PC-9 (cell line): ENCODE measurements at regions of chr12 and their contacts with region 1.

Region 1: GRCh38 chr12:26126340-26127284 is 1.8 kb upstream of the BHLHE41 start:
- DNase-seq: peak; percentile 72 to 91
- H3K4me3 ChIP-seq: peak overlapping the region; percentile 87
- H3K27ac ChIP-seq: peak overlapping the region; percentile 97
- H3K4me1 ChIP-seq: peaks cover 26% of the 10 kb centered on the region
- H3K27me3 ChIP-seq: no peaks in the 10 kb centered on the region
- CTCF ChIP-seq: peak; percentile 35; the same call in 1 of the 2 replicates

Region 2: DNA sequence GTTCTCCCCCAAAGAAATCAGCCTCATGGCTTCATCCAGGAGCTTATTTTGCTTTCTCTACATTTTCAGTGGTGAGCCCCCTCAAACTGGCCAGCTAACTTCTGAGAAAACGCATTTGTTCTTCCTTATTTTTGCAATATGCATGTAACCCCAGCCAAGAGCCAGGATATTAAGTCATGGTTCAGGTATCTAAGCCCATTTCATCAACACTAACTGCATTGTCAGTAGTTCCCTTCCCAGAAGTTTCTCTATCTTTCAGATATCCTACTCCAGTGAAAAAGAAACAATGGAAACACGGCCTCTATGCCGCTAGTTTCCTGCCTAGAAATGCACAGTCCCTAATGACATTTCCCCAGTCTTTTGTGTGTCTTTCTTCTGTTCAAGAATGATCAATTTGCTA is 270.9 kb before region 1 on chr12:
- CTCF ChIA-PET with region 1: no interaction called
- POLR2A ChIA-PET with region 1: no interaction called
- intact Hi-C with region 1: no loop called
- DNase-seq: no peak
- H3K4me3 ChIP-seq: no peak overlapping the region
- H3K27ac ChIP-seq: no peak overlapping the region
- H3K4me1 ChIP-seq: no peaks in the 10 kb centered on the region
- H3K27me3 ChIP-seq: no peaks in the 10 kb centered on the region
- CTCF ChIP-seq: no peak

Region 3: DNA sequence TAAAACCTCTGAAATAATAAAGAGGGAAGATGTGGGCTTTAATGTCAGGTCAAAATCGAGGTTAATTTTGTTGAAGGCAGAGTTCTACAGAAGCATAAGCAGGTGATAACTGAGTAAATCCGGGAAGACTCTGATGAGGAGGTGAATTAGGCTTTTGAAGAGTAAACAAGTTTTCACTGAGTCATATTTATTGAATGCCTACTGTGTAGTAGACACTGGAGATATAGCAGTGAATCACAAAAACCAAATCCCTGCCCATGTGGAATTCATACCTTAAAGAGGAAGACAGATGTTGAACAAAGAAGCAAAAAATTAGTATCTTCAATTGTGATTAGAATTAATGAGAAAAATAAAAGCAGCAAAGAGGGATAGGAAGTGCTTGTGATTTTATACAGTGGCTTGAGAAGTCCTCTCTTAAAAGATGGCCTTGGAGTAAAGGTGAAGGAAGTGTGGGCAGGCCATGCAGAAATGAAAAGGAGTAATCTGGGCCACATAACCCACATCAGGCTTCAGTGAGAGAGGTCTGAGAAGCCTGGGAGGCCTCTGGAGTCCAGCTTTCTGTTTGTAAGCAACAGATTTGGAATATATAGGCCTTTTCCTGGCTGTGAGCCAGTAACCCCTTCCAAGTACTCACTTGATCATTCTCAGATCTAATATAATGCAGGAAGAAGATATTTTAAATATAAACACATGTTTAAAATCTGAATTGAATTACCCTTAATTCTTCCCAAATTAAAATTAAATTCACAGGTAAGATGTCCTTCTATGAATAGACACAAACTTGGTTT is 48.5 kb before region 1 on chr12:
- CTCF ChIA-PET with region 1: interaction called, 14 read pairs
- POLR2A ChIA-PET with region 1: no interaction called
- intact Hi-C with region 1: no loop called
- DNase-seq: peak in 1 of 2 experiments; percentile 60
- H3K4me3 ChIP-seq: no peak overlapping the region
- H3K27ac ChIP-seq: no peak overlapping the region; the same call in 1 of the 2 replicates
- H3K4me1 ChIP-seq: peaks cover 12% of the 10 kb centered on the region
- H3K27me3 ChIP-seq: no peaks in the 10 kb centered on the region
- CTCF ChIP-seq: no peak

Region 4: DNA sequence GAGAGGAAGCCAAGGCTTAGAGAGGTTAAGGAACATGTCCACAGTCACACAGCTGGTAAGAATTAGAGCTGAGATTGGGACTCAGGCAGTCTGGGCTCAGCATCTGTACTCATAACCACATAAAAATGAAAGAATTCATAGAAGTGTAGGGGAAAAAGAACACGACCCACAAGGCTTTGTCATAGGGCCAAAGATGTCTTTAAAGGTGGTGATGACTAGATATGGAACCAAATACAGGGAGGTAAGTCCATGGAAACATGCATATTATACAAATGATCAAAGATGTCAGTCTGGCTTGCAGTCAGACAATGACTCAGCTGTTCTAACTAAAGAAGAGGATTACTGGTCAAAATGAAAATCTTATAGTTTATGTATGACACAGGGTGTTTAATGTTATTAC is 61.5 kb after region 1 on chr12:
- CTCF ChIA-PET with region 1: interaction called, 5 read pairs
- POLR2A ChIA-PET with region 1: interaction called, 16 read pairs
- intact Hi-C with region 1: no loop called
- DNase-seq: no peak
- H3K4me3 ChIP-seq: no peak overlapping the region
- H3K27ac ChIP-seq: no peak overlapping the region
- H3K4me1 ChIP-seq: peaks cover 51% of the 10 kb centered on the region
- H3K27me3 ChIP-seq: no peaks in the 10 kb centered on the region
- CTCF ChIP-seq: no peak

Region 5: GRCh38 chr12:26233631-26234030 is 107.0 kb after region 1 on chr12:
- CTCF ChIA-PET with region 1: no interaction called
- POLR2A ChIA-PET with region 1: no interaction called
- intact Hi-C with region 1: no loop called
- DNase-seq: no peak
- H3K4me3 ChIP-seq: no peak overlapping the region
- H3K27ac ChIP-seq: no peak overlapping the region
- H3K4me1 ChIP-seq: peaks cover 25% of the 10 kb centered on the region
- H3K27me3 ChIP-seq: no peaks in the 10 kb centered on the region
- CTCF ChIP-seq: no peak

Region 6: DNA sequence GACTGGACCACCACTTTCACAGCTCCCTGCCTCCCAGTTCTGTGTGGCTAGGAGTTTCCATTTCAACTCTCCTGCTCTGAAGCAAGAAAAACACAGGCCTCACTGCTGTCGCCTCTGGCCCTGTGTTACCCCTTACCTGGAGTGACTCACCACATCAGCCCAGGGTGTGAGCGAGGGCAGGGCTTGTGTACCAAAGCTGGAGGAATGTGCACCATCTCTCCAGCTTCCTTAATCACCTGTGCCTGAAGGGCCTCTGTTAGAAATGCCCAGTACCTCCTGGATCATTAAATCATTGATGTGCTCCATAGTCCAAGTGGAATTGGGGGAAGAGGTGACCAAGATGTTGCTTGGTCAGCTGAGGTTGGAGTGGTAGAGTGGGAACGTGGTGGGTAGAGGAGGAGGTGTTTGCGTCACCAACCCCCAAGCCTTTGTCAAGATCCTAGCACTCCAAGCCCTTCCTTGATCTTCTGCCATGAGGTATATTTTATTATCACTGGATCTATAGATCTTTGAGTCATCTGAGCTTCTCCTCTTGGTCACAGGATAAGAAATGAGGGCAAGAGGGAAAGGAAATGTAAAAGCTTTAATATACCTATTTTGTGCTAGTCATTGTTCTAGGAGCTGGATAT is 120.0 kb after region 1 on chr12:
- CTCF ChIA-PET with region 1: interaction called, 5 read pairs
- POLR2A ChIA-PET with region 1: interaction called, 9 read pairs
- intact Hi-C with region 1: loop called (anchors 1 kb)
- DNase-seq: peak; percentile 95 to 99
- H3K4me3 ChIP-seq: peak overlapping the region; percentile 10; the same call in 1 of the 2 replicates
- H3K27ac ChIP-seq: peak overlapping the region; percentile 96
- H3K4me1 ChIP-seq: peaks cover 71% of the 10 kb centered on the region
- H3K27me3 ChIP-seq: no peaks in the 10 kb centered on the region
- CTCF ChIP-seq: no peak

Region 7: GRCh38 chr12:26402648-26403047 is 276.0 kb after region 1 on chr12:
- CTCF ChIA-PET with region 1: interaction called, 6 read pairs
- POLR2A ChIA-PET with region 1: interaction called, 3 read pairs
- intact Hi-C with region 1: loop called (anchors 1 kb)
- DNase-seq: peak; percentile 77 to 93
- H3K4me3 ChIP-seq: no peak overlapping the region
- H3K27ac ChIP-seq: peak overlapping the region; percentile 44
- H3K4me1 ChIP-seq: peaks cover 22% of the 10 kb centered on the region
- H3K27me3 ChIP-seq: no peaks in the 10 kb centered on the region
- CTCF ChIP-seq: peak; percentile 55

Region 8: DNA sequence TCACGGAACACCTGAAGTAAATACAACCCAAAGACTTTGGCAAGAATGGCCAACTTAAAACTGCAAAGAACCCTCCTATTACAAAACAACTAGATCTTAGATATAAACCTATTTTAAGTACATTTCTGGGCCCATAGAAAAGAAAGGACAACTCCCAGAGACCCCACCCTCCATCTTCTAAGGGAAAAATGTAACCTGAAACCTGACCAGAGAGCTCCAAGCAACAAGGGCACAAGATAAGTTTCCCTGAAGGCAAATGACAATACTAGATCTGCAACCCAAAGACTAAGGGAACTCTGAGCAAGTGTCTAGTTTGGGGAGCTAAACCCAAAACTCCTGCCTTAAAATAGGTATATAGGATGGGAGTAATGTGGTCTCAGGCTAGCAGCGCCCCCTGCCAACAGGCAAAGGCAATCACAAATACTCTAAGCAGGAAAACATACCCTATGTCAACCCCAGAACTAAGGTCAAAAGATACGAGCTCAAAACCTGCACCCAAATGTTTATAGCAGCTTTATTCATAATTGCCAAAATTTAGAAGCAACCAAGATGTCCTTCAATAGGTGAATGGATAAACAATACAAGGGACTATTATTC is 487.5 kb after region 1 on chr12:
- CTCF ChIA-PET with region 1: no interaction called
- POLR2A ChIA-PET with region 1: no interaction called
- intact Hi-C with region 1: loop called (anchors 2 kb)
- DNase-seq: peak in 1 of 2 experiments; percentile 31
- H3K4me3 ChIP-seq: no peak overlapping the region
- H3K27ac ChIP-seq: no peak overlapping the region
- H3K4me1 ChIP-seq: 0 out of 2 replicates have a peak, but pooled peaks cover 4% of the 10 kb centered on the region
- H3K27me3 ChIP-seq: no peaks in the 10 kb centered on the region
- CTCF ChIP-seq: peak; percentile 64